ENCODE measurements at regions of chr4 and their contacts with region 1.

Region 1: DNA sequence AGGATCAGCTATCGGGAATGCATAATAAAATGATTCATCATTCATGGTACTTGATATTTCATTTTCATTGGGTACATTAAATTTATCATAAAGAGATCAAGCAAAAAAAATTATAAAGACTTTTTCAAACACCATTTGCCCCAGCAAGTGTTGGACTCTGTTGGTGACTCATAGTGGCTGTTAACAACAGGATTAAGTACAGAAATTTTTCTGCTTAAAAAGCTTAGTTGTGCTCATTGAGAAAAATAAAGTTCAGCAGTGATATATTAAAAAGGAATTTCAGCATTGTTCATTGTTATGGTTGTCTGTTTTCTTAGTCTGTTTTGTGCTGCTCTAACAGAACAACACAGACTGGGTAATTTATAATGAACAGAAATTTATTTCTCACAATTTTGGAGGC is 86.2 kb upstream of the PCDH10 start:
- DNase-seq: no peak
- H3K4me3 Mint-ChIP-seq: no peak overlapping the region
- H3K27ac Mint-ChIP-seq: no peak overlapping the region
- H3K4me1 Mint-ChIP-seq: no peaks in the 10 kb centered on the region
- H3K27me3 Mint-ChIP-seq: no peaks in the 10 kb centered on the region
- CTCF ChIP-seq: no peak

Region 2: GRCh38 chr4:132982166-132982565 is 80.7 kb before region 1 on chr4:
- CTCF ChIA-PET with region 1: no interaction called
- POLR2A ChIA-PET with region 1: no interaction called
- intact Hi-C with region 1: no loop called
- DNase-seq: no peak
- H3K4me3 Mint-ChIP-seq: no peak overlapping the region
- H3K27ac Mint-ChIP-seq: no peak overlapping the region
- H3K4me1 Mint-ChIP-seq: no peaks in the 10 kb centered on the region
- H3K27me3 Mint-ChIP-seq: no peaks in the 10 kb centered on the region
- CTCF ChIP-seq: no peak

Region 3: GRCh38 chr4:133046156-133046555 is 16.7 kb before region 1 on chr4:
- CTCF ChIA-PET with region 1: no interaction called
- POLR2A ChIA-PET with region 1: no interaction called
- intact Hi-C with region 1: no loop called
- DNase-seq: no peak
- H3K4me3 Mint-ChIP-seq: no peak overlapping the region
- H3K27ac Mint-ChIP-seq: no peak overlapping the region
- H3K4me1 Mint-ChIP-seq: no peaks in the 10 kb centered on the region
- H3K27me3 Mint-ChIP-seq: no peaks in the 10 kb centered on the region
- CTCF ChIP-seq: no peak

Region 4: DNA sequence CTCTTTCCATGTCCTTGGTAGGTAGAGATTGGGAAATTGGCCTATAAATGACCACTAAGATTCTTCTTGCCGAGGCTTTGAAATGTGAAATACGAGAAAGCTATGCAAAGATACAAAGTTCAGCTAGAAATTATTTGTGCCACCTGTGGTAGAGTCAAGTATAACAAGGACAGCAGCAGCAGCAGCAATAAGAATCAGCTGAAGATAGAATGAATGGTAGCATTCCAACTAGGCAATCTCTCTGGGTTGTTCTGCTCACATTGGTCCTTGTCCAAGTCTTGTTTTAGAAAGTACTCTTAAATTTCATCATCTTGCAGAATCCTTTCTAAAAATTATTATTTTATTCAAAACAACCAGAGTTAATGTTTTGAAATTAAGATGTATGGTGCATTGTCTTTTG is 18.4 kb after region 1 on chr4:
- CTCF ChIA-PET with region 1: no interaction called
- POLR2A ChIA-PET with region 1: no interaction called
- intact Hi-C with region 1: loop called (anchors 1 kb)
- DNase-seq: no peak
- H3K4me3 Mint-ChIP-seq: no peak overlapping the region
- H3K27ac Mint-ChIP-seq: no peak overlapping the region
- H3K4me1 Mint-ChIP-seq: no peaks in the 10 kb centered on the region
- H3K27me3 Mint-ChIP-seq: no peaks in the 10 kb centered on the region
- CTCF ChIP-seq: no peak

Region 5: DNA sequence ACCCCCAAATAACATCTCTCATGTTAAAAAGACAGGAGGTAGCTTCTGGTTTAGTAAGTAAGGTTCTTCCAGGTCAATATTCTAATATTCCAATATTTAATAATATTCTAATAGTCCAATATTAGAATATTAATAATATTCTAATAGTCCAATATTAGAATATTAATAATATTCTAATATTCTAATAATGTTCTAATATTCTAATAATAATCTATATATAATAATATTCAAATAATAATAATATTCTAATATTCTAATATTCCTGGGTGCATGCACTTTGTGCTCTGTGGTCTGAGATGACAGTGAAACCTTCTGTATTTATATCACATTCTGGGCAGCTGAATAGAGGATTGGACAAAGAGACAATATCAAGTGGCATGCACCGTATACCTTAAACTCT is 182.4 kb after region 1 on chr4:
- CTCF ChIA-PET with region 1: no interaction called
- POLR2A ChIA-PET with region 1: no interaction called
- intact Hi-C with region 1: no loop called
- DNase-seq: no peak
- H3K4me3 Mint-ChIP-seq: no peak overlapping the region
- H3K27ac Mint-ChIP-seq: no peak overlapping the region
- H3K4me1 Mint-ChIP-seq: no peaks in the 10 kb centered on the region
- H3K27me3 Mint-ChIP-seq: no peaks in the 10 kb centered on the region
- CTCF ChIP-seq: no peak

Measured in MCF 10A (cell line).